ENCODE measurements at regions of chr4 and their contacts with region 1.

Region 1: GRCh38 chr4:16752150-16752549 is 146.3 kb downstream of the LDB2 start:
- DNase-seq: no peak
- ATAC-seq: no peak
- H3K4me3 ChIP-seq: no peak overlapping the region
- H3K27ac ChIP-seq: no peak overlapping the region
- H3K4me1 ChIP-seq: peaks cover 0 to 8% (median 0%) of the 10 kb centered on the region in 12 donors
- H3K27me3 ChIP-seq: no peaks in the 10 kb centered on the region
- CTCF ChIP-seq: peak in 7 of 12 donors; percentile 14 to 38 (median 30)
- POLR2A ChIP-seq: no peak

Region 2: GRCh38 chr4:16516796-16517439 is 235.2 kb before region 1 on chr4:
- intact Hi-C with region 1: loop called in 1 of 10 experiments (anchors 5 kb)
- DNase-seq: peak in 4 of 5 donors; percentile 35 to 50 (median 42)
- ATAC-seq: peak in 3 of 4 donors; percentile 39 to 59 (median 57)
- H3K4me3 ChIP-seq: no peak overlapping the region
- H3K27ac ChIP-seq: no peak overlapping the region
- H3K4me1 ChIP-seq: peaks cover 0 to 21% (median 2%) of the 10 kb centered on the region in 12 donors
- H3K27me3 ChIP-seq: no peaks in the 10 kb centered on the region
- CTCF ChIP-seq: peak in 8 of 12 donors; percentile 25 to 53 (median 32)
- POLR2A ChIP-seq: no peak

Region 3: DNA sequence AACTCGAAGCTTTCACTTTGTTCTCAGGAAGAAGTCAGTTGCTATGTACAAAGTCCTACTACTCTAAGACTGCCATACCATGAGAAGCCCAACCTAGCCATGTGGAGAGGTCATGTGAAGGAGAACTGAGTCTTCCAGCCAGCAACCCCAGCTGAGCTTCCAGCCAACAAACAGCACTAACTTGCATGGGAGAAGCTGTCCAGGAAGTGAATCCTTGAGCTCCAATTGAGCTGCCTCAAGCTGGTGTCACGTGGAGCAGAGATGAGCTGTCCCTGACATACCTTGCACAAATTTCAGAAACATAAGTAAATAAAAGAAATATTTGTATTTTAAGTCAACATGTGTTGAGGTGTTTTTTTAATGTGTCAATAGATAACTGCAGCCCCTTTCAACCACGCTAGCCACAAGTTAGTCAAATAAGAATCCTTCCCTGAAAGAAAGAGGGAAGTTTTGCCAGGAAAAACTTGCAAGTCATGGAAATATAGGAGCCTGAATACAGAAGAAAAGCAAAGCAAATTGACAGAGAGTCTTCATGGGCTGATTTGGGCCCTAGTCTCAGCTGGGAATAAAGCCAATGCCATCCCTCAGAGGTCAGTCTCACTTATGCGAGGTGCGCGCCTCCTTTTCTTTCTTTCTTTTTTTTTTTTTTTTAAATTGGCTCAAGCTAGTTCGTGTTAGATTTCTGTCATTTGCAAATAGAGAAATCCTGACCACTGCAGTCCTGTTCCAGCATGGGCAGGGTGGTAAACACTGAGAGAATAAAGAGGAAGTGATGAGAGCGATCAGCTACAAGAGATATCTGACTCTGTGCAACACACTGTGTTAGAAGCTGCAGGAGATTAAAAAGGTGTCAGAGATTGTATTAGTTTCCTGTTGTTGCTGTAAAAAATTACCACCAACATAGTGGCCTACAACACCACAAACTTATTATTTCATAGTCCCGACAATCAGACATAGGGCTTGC is 153.6 kb before region 1 on chr4:
- intact Hi-C with region 1: no loop called
- DNase-seq: no peak
- ATAC-seq: peak in 2 of 4 donors; percentile 16 to 41
- H3K4me3 ChIP-seq: no peak overlapping the region
- H3K27ac ChIP-seq: peak overlapping the region in 8 of 12 donors; percentile 18 to 52 (median 35)
- H3K4me1 ChIP-seq: peaks cover 0 to 14% (median 3%) of the 10 kb centered on the region in 12 donors
- H3K27me3 ChIP-seq: no peaks in the 10 kb centered on the region
- CTCF ChIP-seq: no peak
- POLR2A ChIP-seq: no peak

Region 4: DNA sequence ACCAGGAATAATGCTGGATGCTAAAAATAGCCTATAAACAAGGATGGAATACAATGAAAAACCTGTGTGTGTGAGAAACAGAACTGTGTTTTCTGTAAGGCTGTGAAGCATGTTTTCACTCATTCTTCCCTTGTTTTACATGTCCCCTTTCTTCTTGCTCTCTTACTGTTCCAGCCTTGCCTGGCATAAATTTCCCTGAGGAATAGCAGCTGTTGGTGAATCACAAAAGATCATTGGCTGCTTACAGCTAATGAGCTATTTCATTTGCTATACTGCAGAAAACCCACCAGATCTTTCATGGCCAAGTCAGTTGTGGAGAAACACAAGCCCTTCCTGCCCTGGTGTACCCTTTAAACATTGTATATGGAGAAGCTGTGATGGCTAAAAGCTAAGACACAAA is 55.2 kb after region 1 on chr4:
- intact Hi-C with region 1: no loop called
- DNase-seq: no peak
- ATAC-seq: no peak
- H3K4me3 ChIP-seq: no peak overlapping the region
- H3K27ac ChIP-seq: no peak overlapping the region
- H3K4me1 ChIP-seq: peaks cover 0 to 4% (median 0%) of the 10 kb centered on the region in 12 donors
- H3K27me3 ChIP-seq: no peaks in the 10 kb centered on the region
- CTCF ChIP-seq: no peak
- POLR2A ChIP-seq: no peak

Region 5: DNA sequence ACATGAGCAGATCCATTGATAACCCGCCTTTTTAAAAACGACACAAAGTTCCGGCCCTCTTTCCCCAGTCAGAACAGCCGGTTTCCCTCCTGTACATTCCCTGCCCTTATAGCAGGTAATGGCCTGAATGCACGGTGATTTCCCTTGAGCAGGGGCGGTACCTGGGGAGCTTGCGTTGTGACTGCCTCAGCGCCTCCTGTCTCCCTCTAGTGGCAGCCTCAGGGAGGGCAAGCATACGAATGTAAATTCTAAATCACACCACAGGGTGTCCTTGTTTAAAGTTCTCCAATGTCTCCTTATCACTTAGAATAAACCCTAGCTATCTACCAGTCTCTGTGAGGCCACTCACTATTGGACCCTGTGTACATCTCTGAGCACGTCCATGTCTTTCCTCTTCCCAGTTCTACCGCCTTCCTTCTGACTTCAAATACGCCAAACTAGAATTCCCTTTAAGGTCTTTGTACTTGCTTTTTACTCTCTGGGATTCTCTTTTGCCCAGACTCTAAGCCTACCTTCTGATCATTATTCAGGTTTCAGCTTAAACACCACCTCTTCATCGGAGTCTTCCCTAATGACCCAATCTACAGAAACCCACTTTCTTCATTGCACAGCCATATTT is 164.7 kb after region 1 on chr4:
- intact Hi-C with region 1: loop called in 1 of 10 experiments (anchors 10 kb)
- DNase-seq: peak in 4 of 5 donors; percentile 27 to 68 (median 48)
- ATAC-seq: peak in 3 of 4 donors; percentile 22 to 69 (median 45)
- H3K4me3 ChIP-seq: no peak overlapping the region
- H3K27ac ChIP-seq: no peak overlapping the region
- H3K4me1 ChIP-seq: no peaks in the 10 kb centered on the region
- H3K27me3 ChIP-seq: no peaks in the 10 kb centered on the region
- CTCF ChIP-seq: peak; percentile 58 to 86 (median 71)
- POLR2A ChIP-seq: no peak

Measured in heart left ventricle (tissue), 16 donors.